Posterior vena cava (tissue), 2 donors: ENCODE measurements at regions of chr2 and their contacts with region 1.

Region 1: GRCh38 chr2:48699348-48699930 is 56.1 kb downstream of the LHCGR start:
- DNase-seq: no peak

Region 2: DNA sequence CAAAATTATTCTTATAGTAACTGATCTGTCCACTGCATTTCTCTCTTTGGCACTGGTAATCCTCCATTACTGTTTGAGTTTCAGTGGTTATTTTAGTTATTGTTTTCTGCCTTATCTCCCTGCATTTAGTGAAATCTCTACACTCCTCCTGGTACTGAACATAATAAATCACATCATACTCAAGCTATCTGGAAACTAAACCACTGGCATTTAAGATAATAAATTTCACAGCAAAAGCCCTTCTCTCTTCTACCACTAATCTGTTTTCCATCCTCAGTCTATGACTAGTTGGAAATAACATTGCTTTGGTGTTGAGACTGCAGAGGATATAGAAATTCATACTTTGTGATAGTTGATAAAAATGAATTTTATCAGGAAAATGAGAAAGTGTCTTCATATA is 854.2 kb after region 1 on chr2:
- intact Hi-C with region 1: no loop called
- DNase-seq: no peak

Region 3: GRCh38 chr2:50449306-50449705 is 1749.9 kb after region 1 on chr2:
- intact Hi-C with region 1: loop called in 1 of 2 experiments (anchors 5 kb)
- DNase-seq: no peak